ENCODE measurements at regions of chr1 and their contacts with region 1.

Region 1: DNA sequence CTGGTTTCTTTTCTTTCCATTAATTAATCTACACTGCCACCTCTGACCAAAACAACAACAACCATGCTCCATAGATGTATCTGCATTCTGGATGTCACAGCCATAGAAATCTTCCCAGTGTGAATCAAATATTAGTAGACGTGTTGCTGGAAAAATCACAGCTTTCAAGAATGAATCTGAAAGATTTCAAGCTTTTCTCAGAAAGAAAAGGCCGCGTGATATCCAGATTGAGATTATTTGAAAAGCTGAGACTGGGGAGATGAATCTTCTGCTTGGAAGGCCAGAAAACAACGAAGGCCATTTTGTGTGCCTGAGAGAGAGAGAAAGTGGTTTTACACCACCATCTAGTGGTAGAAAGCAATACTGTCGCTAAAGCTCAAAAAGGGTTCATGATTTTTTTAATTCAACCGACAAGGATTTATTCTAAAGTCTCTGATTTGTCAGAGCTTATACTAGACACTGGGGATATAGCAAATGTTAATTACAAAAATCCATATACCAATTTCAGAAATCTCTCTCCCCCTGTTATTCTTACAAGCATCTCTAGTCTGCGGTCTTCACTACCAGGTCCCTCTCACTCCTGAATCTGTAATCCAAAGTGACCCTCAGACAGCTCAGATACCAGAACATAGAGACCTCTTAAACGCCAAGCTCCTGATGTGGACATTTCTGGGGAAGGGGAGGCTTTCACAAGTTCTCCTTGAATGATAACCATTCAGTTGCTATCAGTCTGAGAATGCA is 87.5 kb upstream of the SGIP1 start:
- DNase-seq: peak; percentile 57 to 76 (median 75)
- H3K4me3 ChIP-seq: peak overlapping the region in 1 of 2 donors; percentile 21
- H3K4me3 Mint-ChIP-seq: peak overlapping the region in 7 of 8 donors; percentile 36 to 84 (median 68)
- H3K27ac ChIP-seq: peak overlapping the region; percentile 48
- H3K27ac Mint-ChIP-seq: peak overlapping the region; percentile 73 to 95 (median 90)
- H3K4me1 ChIP-seq: peaks cover 23% of the 10 kb centered on the region
- H3K4me1 Mint-ChIP-seq: peaks cover 19 to 25% (median 21%) of the 10 kb centered on the region in 4 donors
- H3K27me3 ChIP-seq: no peaks in the 10 kb centered on the region
- H3K27me3 Mint-ChIP-seq: peaks cover 1 to 4% of the 10 kb centered on the region in 2 donors

Region 2: DNA sequence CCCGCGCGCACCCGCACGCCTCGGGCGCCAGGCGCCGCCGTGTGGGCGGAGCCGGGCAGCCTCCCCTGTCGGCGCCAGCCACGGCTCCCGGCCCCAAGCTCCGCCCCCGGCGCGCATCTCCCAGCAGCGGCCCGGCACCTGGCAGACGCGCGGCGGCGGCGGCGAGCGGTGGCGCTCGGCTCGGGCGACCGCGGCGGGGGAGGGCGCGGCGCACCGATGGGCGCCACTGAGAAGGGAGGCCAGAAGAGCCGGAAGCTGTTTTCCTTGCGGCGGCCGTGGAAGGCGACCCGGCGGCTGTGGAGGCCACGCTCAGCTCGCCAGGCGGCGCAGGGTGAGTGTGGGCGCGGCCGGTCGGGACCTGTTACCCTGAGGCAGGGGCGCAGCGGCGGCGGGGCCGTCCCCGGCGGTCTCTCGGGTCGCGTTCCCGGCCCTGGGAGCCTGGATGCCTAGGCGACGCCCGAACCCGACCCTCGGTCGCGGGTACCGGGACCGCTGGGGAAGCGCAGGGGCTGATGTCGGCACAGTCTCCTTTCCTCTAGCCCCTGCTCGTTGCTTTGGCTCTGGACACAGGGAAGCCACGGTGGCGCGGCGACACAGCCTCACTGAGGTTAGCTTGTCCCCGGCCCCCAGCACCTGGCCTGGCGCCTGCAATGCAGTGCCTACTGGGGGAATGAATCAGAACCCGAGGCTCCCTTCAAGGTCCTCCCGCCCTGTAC is 1192.0 kb before region 1 on chr1:
- CTCF ChIA-PET with region 1: no interaction called
- POLR2A ChIA-PET with region 1: no interaction called
- intact Hi-C with region 1: loop called (anchors 10 kb)
- DNase-seq: peak; percentile 81 to 85 (median 83)
- H3K4me3 ChIP-seq: peak overlapping the region; percentile 45 to 68
- H3K4me3 Mint-ChIP-seq: peak overlapping the region; percentile 85 to 98 (median 94)
- H3K27ac ChIP-seq: no peak overlapping the region
- H3K27ac Mint-ChIP-seq: peak overlapping the region in 5 of 7 donors; percentile 72 to 94 (median 88)
- H3K4me1 ChIP-seq: peaks cover 20% of the 10 kb centered on the region
- H3K4me1 Mint-ChIP-seq: peaks cover 8 to 20% (median 16%) of the 10 kb centered on the region in 4 donors
- H3K27me3 ChIP-seq: no peaks in the 10 kb centered on the region
- H3K27me3 Mint-ChIP-seq: peaks cover 0 to 4% of the 10 kb centered on the region in 2 donors

Region 3: DNA sequence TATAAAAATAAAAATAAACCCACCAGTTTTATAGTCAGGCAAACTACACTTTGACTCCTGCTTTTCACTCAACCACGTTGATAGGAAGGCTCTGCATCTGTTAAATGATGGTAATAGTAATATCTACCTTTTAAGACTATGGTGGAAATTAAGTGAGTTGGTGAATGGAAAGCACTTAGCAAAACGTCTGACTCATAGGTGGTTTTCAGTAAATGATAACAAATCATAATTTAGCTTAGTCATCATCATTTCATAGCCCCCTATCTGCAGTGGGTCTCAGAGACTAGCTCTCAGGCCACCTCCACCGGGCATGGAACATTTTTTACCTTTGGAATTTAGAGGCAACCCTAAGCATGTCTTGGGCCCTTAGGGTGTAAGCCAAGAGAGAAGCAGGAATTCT is 493.7 kb before region 1 on chr1:
- CTCF ChIA-PET with region 1: interaction called, 71 read pairs
- POLR2A ChIA-PET with region 1: no interaction called
- intact Hi-C with region 1: no loop called
- DNase-seq: no peak
- H3K4me3 ChIP-seq: no peak overlapping the region
- H3K4me3 Mint-ChIP-seq: no peak overlapping the region
- H3K27ac ChIP-seq: no peak overlapping the region
- H3K27ac Mint-ChIP-seq: no peak overlapping the region
- H3K4me1 ChIP-seq: no peaks in the 10 kb centered on the region
- H3K4me1 Mint-ChIP-seq: no peaks in the 10 kb centered on the region
- H3K27me3 ChIP-seq: no peaks in the 10 kb centered on the region
- H3K27me3 Mint-ChIP-seq: peaks cover 0 to 4% of the 10 kb centered on the region in 2 donors

Region 4: GRCh38 chr1:66253330-66253921 is 193.0 kb before region 1 on chr1:
- CTCF ChIA-PET with region 1: interaction called, 874 read pairs
- POLR2A ChIA-PET with region 1: interaction called, 59 read pairs
- intact Hi-C with region 1: loop called (anchors 1 kb)
- DNase-seq: peak in 4 of 5 donors; percentile 45 to 55 (median 50)
- H3K4me3 ChIP-seq: no peak overlapping the region
- H3K4me3 Mint-ChIP-seq: no peak overlapping the region
- H3K27ac ChIP-seq: no peak overlapping the region
- H3K27ac Mint-ChIP-seq: peak overlapping the region in 1 of 7 donors; percentile 57
- H3K4me1 ChIP-seq: peaks cover 26% of the 10 kb centered on the region
- H3K4me1 Mint-ChIP-seq: peaks cover 5 to 24% (median 16%) of the 10 kb centered on the region in 4 donors
- H3K27me3 ChIP-seq: no peaks in the 10 kb centered on the region
- H3K27me3 Mint-ChIP-seq: peaks cover 0 to 2% of the 10 kb centered on the region in 2 donors

Region 5: GRCh38 chr1:66291047-66291868 is 155.2 kb before region 1 on chr1:
- CTCF ChIA-PET with region 1: interaction called, 14 read pairs
- POLR2A ChIA-PET with region 1: no interaction called
- intact Hi-C with region 1: no loop called
- DNase-seq: no peak
- H3K4me3 ChIP-seq: no peak overlapping the region
- H3K4me3 Mint-ChIP-seq: no peak overlapping the region
- H3K27ac ChIP-seq: no peak overlapping the region
- H3K27ac Mint-ChIP-seq: peak overlapping the region in 2 of 7 donors; percentile 24 to 45
- H3K4me1 ChIP-seq: peaks cover 13% of the 10 kb centered on the region
- H3K4me1 Mint-ChIP-seq: peaks cover 25 to 40% (median 30%) of the 10 kb centered on the region in 4 donors
- H3K27me3 ChIP-seq: no peaks in the 10 kb centered on the region
- H3K27me3 Mint-ChIP-seq: no peaks in the 10 kb centered on the region

Region 6: DNA sequence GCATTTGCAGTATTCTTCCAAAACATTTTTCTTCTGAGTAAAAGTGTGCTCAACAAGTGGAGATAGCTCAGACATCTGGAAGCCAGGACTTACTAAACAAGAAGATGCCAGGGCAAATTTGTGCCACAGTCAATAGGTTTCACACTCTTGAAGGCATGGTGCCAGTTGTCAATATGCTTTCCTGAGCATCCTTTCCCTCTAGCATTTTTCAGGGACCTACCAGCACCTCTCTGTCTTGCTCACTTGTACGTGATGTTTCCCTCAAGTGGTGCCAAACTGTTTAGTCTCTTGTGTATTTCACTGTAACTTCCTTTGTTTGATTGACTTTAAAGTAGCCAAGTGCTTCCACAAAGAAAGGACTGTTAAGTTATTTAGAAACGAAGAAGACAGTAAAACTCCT is 106.5 kb before region 1 on chr1:
- CTCF ChIA-PET with region 1: interaction called, 88 read pairs
- POLR2A ChIA-PET with region 1: interaction called, 18 read pairs
- intact Hi-C with region 1: loop called (anchors 2 kb)
- DNase-seq: no peak
- H3K4me3 ChIP-seq: peak overlapping the region in 1 of 2 donors; percentile 11
- H3K4me3 Mint-ChIP-seq: peak overlapping the region; percentile 52 to 84 (median 67)
- H3K27ac ChIP-seq: peak overlapping the region; percentile 49
- H3K27ac Mint-ChIP-seq: peak overlapping the region; percentile 61 to 94 (median 80)
- H3K4me1 ChIP-seq: peaks cover 88% of the 10 kb centered on the region
- H3K4me1 Mint-ChIP-seq: peaks cover 46 to 86% (median 68%) of the 10 kb centered on the region in 4 donors
- H3K27me3 ChIP-seq: no peaks in the 10 kb centered on the region
- H3K27me3 Mint-ChIP-seq: no peaks in the 10 kb centered on the region

Region 7: DNA sequence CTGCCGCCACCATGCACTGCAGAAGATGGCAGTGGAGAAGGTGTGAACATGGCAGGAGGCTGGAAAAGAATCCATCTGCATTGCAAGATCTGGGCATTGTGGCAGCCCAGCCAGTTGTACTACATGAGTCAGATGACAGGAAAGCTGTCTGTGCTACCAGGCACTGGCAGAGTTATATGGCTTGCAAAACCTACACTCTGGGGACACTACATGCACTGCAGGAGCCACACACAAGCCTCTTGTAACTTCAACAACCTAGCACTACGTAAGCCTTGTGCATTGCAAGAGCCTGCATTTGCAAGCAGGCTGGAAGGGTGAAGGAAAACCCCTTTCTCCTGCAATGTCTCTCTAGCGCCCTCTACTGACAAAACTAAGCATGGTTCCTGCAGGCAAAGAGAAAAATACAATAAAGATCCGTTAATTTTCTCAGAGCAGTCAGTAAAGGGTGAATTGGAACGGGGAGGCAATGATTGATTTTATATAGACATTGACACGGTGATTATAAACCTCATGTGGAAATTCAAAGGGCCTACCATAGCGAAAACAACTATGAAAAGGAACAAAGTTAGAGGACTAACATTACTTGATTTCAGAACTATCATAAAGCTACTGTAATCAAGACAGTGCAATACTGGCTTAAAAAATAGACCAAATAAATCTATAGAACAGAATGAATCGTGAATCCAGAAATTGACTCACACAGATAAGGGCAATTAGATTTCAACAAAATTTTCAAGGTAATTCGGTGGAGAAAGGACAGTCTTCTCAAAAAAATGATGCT is 279.6 kb after region 1 on chr1:
- CTCF ChIA-PET with region 1: interaction called, 3 read pairs
- POLR2A ChIA-PET with region 1: no interaction called
- intact Hi-C with region 1: loop called (anchors 5 kb)
- DNase-seq: peak; percentile 54 to 66 (median 59)
- H3K4me3 ChIP-seq: no peak overlapping the region
- H3K4me3 Mint-ChIP-seq: no peak overlapping the region
- H3K27ac ChIP-seq: no peak overlapping the region
- H3K27ac Mint-ChIP-seq: no peak overlapping the region
- H3K4me1 ChIP-seq: no peaks in the 10 kb centered on the region
- H3K4me1 Mint-ChIP-seq: peaks cover 9 to 18% (median 15%) of the 10 kb centered on the region in 4 donors
- H3K27me3 ChIP-seq: no peaks in the 10 kb centered on the region
- H3K27me3 Mint-ChIP-seq: peaks cover 7 to 14% of the 10 kb centered on the region in 2 donors